ENCODE measurements at regions of chr17 and their contacts with region 1.

Region 1: DNA sequence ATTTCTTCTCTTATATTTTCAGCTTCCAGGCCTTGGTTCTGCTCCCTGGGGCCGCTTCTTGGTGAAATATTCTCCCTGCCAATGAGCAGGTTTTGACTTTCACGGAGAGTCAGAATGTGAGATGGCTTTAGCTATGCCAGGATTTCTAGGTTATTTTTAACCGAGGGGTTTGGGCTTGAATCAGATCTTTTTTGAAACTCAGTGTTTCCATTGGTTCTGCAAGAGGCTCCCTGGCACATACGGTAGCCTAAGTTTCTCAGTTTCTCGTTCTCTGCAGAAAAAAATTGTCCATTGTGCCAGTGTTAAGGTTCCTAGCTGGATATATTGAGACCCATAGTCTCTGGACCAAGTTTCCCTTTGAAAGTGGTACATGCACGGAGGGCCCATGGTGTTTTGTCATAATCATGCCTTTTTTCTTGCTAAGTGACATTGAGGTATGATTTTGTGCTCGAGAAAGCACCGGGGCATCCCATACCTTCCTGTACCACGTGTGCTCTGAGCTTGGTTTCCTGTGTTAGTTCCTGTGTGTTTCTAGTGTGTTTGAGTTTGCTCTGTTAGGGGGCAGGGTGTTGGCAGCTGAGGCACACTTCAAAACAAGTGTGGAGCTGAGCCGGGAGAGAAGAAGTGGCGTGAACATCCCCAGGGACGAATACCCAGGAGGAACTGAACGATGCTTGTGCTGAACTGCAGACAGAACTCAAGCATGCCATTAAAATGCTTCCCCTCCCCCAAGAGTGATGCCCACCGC is 127.2 kb downstream of the HS3ST3B1 start:
- DNase-seq: peak; percentile 54
- H3K4me3 Mint-ChIP-seq: peak overlapping the region; percentile 63
- H3K27ac Mint-ChIP-seq: peak overlapping the region; percentile 76
- H3K4me1 Mint-ChIP-seq: peaks cover 41% of the 10 kb centered on the region
- H3K27me3 Mint-ChIP-seq: peaks cover 3% of the 10 kb centered on the region

Region 2: DNA sequence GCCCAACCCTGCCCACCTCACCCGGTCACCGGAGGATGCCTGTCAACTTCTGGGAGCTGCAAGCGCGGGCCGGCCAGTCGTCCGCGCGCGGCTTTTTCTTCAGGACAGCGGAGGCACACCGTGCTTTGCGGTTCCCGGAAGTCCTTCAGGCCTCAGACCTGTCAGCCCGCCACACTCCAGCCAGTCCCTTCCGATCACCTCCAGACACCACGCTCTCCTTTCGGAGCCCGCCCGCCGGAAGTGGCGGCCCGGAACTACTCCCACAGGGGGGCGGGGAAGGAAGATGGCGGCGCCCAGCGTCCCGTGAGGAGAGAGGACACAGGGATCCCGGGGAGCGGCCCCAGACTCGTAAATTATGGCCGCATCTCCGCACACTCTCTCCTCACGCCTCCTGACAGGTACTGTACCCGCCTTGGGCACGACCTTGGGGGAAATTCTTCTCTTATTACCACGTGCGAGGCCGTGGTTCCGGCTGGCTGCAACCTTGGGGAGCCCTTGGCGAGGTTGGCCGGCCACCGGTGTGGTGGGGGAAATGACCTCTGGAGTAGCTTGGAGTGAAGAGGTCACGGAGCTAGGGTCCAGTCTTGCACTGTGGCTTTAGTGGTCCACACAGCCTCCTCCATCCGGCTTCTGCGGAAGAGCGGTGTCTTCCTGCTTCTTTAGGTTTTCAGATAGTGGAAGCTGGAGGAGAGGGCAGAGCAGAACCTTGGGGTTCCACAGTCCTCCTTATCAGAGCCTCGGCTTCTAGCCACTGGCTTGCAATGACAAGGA is 358.6 kb before region 1 on chr17 and contains the start of gene COX10:
- intact Hi-C with region 1: loop called (anchors 10 kb)
- DNase-seq: peak; percentile 85
- H3K4me3 Mint-ChIP-seq: peak within 1 kb of the TSS; percentile 97
- H3K27ac Mint-ChIP-seq: peak within 1 kb of the TSS; percentile 94
- H3K4me1 Mint-ChIP-seq: peaks cover 78% of the 10 kb centered on the region
- H3K27me3 Mint-ChIP-seq: no peaks in the 10 kb centered on the region
- total RNA-seq, gene COX10: 40.1 and 41.7 TPM in 2 replicates

Region 3: DNA sequence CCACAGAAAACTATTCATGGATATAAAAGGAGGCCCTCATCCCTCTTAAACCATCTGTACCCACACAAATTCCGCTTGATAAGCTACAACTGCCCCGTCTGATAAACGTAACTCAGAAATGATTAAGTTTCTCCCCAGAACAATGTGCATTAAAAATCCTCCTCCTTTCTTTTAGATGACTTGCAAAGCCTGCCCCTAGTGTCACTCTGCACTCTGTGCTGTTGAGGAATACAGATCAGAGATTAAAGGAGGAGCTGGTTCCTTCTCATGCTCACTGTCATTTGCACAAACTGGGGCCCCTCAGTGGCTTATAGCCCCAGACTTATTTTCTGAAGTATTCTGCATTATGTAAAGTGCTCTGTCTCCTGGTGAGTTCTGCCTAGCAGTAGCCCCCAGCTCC is 224.7 kb before region 1 on chr17:
- intact Hi-C with region 1: loop called (anchors 5 kb)
- DNase-seq: peak; percentile 32
- H3K4me3 Mint-ChIP-seq: peak overlapping the region; percentile 24
- H3K27ac Mint-ChIP-seq: peak overlapping the region; percentile 85
- H3K4me1 Mint-ChIP-seq: peaks cover 90% of the 10 kb centered on the region
- H3K27me3 Mint-ChIP-seq: no peaks in the 10 kb centered on the region

Region 4: DNA sequence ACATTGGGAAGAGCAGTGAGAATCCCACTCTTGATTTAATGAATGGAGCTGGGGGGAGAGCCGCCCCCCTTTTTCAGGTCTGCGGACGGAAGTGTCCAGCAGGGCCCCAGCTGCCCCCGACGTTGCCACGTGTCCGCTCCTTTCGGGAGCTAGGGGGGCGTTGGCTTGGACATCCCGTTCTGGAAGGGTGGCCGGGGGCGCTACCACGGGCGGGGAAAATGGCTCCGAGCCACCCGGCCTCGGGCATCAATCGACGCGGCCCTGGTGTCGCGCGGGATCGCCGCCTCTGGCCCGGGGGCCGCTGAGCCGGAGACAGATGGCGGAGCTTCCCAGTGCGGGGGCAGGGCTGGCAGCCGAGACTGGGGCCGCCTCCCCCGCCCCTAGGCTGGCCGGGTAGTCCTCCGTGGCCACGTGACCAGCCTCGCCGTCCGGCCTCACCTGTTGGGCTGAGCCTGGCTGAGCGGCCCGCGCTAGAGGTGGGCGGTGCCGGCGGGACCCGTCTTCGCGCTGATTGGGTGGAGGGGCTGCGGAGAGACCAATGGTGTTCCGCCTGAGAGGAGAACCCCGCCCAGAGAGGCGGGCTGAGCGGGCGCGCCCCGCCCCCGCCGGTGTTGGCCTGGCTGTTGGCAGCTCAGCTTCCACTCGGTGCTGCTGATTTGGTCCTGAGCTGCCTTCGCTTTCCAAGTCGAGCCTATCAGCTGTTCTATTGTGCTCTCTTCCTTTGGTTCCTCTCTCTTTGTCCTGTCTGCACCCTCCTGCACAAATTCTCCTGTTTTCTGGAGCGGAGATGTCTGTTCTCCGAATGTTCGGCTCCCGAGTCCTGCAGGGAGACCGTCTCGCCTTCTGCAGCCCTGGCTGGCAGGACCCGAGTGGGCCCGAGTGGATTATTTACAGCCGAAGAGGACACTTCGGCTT is 118.9 kb before region 1 on chr17:
- intact Hi-C with region 1: loop called (anchors 1 kb)
- DNase-seq: peak; percentile 87
- H3K4me3 Mint-ChIP-seq: peak overlapping the region; percentile 80
- H3K27ac Mint-ChIP-seq: peak overlapping the region; percentile 70
- H3K4me1 Mint-ChIP-seq: peaks cover 66% of the 10 kb centered on the region
- H3K27me3 Mint-ChIP-seq: peaks cover 1% of the 10 kb centered on the region

Region 5: DNA sequence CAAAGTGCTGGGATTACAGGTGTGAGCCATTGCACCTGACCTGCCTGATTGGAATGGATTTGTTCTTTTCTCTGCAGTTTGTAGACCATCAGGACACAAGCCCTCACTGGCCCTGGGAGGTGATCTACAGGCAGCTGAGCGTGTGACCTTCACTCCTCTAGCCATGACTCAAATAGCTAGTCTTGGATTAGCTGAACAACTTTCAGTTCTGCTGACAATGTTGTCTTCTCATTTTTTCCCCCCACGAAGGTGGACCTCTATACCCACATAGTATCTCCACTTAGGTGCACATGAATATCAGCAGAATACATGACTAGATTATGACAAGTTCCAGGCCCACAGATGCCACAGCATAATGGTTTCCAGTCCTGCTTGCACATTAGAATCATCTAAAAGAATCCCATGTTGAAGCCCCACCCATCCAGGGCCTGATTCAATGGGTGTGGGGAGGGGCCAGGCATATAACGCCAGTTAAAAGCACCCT is 90.4 kb before region 1 on chr17:
- intact Hi-C with region 1: loop called (anchors 1 kb)
- DNase-seq: no peak
- H3K4me3 Mint-ChIP-seq: peak overlapping the region; percentile 69
- H3K27ac Mint-ChIP-seq: peak overlapping the region; percentile 89
- H3K4me1 Mint-ChIP-seq: peaks cover 61% of the 10 kb centered on the region
- H3K27me3 Mint-ChIP-seq: no peaks in the 10 kb centered on the region

Region 6: DNA sequence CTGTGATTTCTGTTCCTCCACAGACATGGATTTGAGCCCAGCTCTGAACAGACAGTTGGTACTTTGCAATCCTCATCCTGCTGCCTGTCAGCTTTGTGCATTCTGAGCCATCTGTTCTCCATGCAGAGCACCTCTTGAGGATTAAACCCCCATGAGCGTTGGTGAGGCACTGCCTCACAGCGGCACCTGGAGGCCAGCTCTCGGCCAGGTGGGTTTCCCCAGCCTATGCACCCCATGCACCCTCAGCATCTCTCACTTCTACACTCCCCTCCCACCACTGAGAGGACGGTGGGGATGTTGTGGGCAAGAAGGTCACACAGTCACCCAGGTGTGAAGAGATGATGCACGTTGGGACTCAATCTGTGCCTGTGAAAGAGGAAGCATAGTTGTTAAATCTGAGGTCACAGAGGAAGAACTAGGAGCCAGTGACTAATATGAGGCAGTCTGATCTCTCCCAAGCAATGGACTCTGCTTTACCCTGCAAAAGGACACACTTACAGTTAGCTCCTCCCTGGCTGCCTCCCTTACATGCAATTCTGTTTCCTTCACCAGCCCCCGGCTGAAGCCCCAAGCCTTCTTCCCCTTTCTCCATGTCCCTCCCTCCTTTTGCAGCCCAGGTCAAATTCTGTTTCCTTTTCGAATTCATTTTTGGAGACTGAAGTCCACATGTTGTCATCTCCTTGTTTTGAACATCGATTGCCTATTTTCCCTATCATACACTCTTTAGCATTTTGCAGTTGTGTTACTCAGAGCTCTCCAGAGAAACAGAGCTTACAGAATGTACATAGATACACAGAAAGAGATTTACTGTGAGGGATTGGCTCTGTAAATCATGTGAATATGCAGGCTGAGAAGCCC is 68.7 kb before region 1 on chr17:
- intact Hi-C with region 1: loop called (anchors 1 kb)
- DNase-seq: no peak
- H3K4me3 Mint-ChIP-seq: no peak overlapping the region
- H3K27ac Mint-ChIP-seq: no peak overlapping the region
- H3K4me1 Mint-ChIP-seq: peaks cover 14% of the 10 kb centered on the region
- H3K27me3 Mint-ChIP-seq: no peaks in the 10 kb centered on the region

Region 7: GRCh38 chr17:14409292-14409691 is 18.8 kb before region 1 on chr17:
- intact Hi-C with region 1: loop called (anchors 1 kb)
- DNase-seq: no peak
- H3K4me3 Mint-ChIP-seq: no peak overlapping the region
- H3K27ac Mint-ChIP-seq: no peak overlapping the region
- H3K4me1 Mint-ChIP-seq: peaks cover 12% of the 10 kb centered on the region
- H3K27me3 Mint-ChIP-seq: peaks cover 3% of the 10 kb centered on the region

Region 8: GRCh38 chr17:14499976-14500375 is 71.9 kb after region 1 on chr17:
- intact Hi-C with region 1: no loop called
- DNase-seq: no peak
- H3K4me3 Mint-ChIP-seq: no peak overlapping the region
- H3K27ac Mint-ChIP-seq: no peak overlapping the region
- H3K4me1 Mint-ChIP-seq: no peaks in the 10 kb centered on the region
- H3K27me3 Mint-ChIP-seq: peaks cover 4% of the 10 kb centered on the region

Measured in activated T-helper 1 cell treated with anti-CD3 and anti-CD28 coated beads, Interleukin-12 subunit alpha, Interleukin-12 subunit beta, Interleukin-2, Interleukin-4 antibody, amounts not matched to agents 30 ng/mL and 10 ng/mL and 1 ng/mL, durations not matched to agents 14 hours and 24 hours and 36 hours (primary cell).